PC-3 (cell line): ENCODE measurements at regions of chr12 and their contacts with region 1.

Region 1: DNA sequence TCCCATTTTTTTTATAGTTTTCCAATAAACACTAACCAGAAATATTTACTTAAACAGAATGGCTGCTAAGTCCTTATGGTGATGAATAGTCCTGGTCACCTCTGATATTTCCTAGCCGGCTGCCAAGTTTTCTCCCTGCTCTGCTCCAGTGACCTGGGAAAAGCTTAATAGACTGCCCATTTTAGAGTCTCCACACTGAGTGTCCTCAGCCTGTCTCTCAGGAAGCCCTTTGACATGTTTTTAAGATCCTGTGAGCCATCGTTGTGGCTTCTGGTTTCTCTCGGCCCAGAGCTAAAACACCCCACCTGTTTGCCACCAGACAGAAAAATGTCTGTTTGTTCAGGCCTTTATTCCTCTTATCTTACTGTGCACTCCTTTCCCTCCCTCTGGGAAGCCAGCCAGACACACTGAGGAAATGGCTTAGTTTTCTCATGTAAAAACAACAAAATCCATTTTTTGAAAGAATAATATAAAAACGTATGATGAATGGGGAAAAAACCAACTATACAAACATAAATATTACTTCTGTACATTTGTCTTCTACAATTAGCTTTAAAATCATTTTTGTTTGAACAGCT is 25.4 kb upstream of the ALDH2 start:
- DNase-seq: peak; percentile 61
- ATAC-seq: peak; percentile 92
- H3K4me3 ChIP-seq: no peak overlapping the region
- H3K27ac ChIP-seq: peak overlapping the region; percentile 19
- H3K4me1 ChIP-seq: peaks cover 14% of the 10 kb centered on the region
- H3K27me3 ChIP-seq: no peaks in the 10 kb centered on the region
- CTCF ChIP-seq: no peak

Region 2: GRCh38 chr12:111753144-111753881 is 12.0 kb after region 1 on chr12:
- CTCF ChIA-PET with region 1: interaction called, 13 read pairs
- POLR2A ChIA-PET with region 1: no interaction called
- intact Hi-C with region 1: no loop called
- DNase-seq: peak; percentile 48
- ATAC-seq: peak; percentile 88
- H3K4me3 ChIP-seq: no peak overlapping the region
- H3K27ac ChIP-seq: no peak overlapping the region
- H3K4me1 ChIP-seq: no peaks in the 10 kb centered on the region
- H3K27me3 ChIP-seq: no peaks in the 10 kb centered on the region
- CTCF ChIP-seq: peak; percentile 75

Region 3: GRCh38 chr12:111887926-111888745 is 146.8 kb after region 1 on chr12:
- CTCF ChIA-PET with region 1: no interaction called
- POLR2A ChIA-PET with region 1: no interaction called
- intact Hi-C with region 1: no loop called
- DNase-seq: no peak
- ATAC-seq: no peak
- H3K4me3 ChIP-seq: no peak overlapping the region
- H3K27ac ChIP-seq: no peak overlapping the region
- H3K4me1 ChIP-seq: no peaks in the 10 kb centered on the region
- H3K27me3 ChIP-seq: no peaks in the 10 kb centered on the region
- CTCF ChIP-seq: no peak